ENCODE measurements at regions of chr4 and their contacts with region 1.

Region 1: GRCh38 chr4:70801265-70801809 is 38.4 kb downstream of the GRSF1 start:
- DNase-seq: no peak
- ATAC-seq: no peak
- H3K4me3 ChIP-seq: no peak overlapping the region
- H3K27ac ChIP-seq: no peak overlapping the region
- H3K4me1 ChIP-seq: no peaks in the 10 kb centered on the region
- H3K27me3 ChIP-seq: no peaks in the 10 kb centered on the region

Region 2: GRCh38 chr4:70559211-70559830 is 242.0 kb before region 1 on chr4:
- intact Hi-C with region 1: no loop called
- DNase-seq: no peak
- ATAC-seq: no peak
- H3K4me3 ChIP-seq: no peak overlapping the region
- H3K27ac ChIP-seq: no peak overlapping the region
- H3K4me1 ChIP-seq: no peaks in the 10 kb centered on the region
- H3K27me3 ChIP-seq: no peaks in the 10 kb centered on the region

Region 3: GRCh38 chr4:70788733-70789132 is 12.6 kb before region 1 on chr4:
- intact Hi-C with region 1: loop called in 1 of 2 experiments (anchors 2 kb)
- DNase-seq: no peak
- ATAC-seq: no peak
- H3K4me3 ChIP-seq: no peak overlapping the region
- H3K27ac ChIP-seq: no peak overlapping the region
- H3K4me1 ChIP-seq: no peaks in the 10 kb centered on the region
- H3K27me3 ChIP-seq: no peaks in the 10 kb centered on the region

Region 4: DNA sequence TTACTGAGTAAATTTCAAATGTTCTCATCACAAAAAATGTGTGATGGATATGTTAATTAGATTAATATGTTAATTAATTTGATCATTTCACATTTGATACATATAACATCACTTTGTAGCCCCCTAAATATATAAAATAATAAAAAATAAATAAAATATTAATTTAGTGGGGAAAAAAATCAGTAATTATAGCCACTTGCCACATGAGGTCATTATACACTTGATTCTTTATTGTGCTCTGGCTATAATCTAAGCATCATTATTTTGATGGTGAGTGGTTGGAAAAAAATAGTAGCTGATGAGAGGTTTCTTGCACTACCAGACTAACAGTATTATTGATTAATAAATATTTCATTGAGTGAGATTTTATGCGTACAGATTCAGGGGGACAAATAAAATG is 249.5 kb after region 1 on chr4:
- intact Hi-C with region 1: no loop called
- DNase-seq: no peak
- ATAC-seq: no peak
- H3K4me3 ChIP-seq: no peak overlapping the region
- H3K27ac ChIP-seq: no peak overlapping the region
- H3K4me1 ChIP-seq: no peaks in the 10 kb centered on the region
- H3K27me3 ChIP-seq: no peaks in the 10 kb centered on the region